Dendritic cell treated with granulocyte-macrophage colony-stimulating factor and Interleukin-4, amounts not matched to agents 40 ng/mL and 50 ng/mL, for 4 days (primary cell): ENCODE measurements at regions of chr1 and their contacts with region 1.

Region 1: GRCh38 chr1:46247436-46248121 is at the start of gene RAD54L:
- H3K4me3 Mint-ChIP-seq: peak within 1 kb of the TSS; percentile 95
- H3K27ac Mint-ChIP-seq: peak within 1 kb of the TSS; percentile 86
- H3K4me1 Mint-ChIP-seq: peaks cover 20% of the 10 kb centered on the region
- H3K27me3 Mint-ChIP-seq: no peaks in the 10 kb centered on the region

Region 2: DNA sequence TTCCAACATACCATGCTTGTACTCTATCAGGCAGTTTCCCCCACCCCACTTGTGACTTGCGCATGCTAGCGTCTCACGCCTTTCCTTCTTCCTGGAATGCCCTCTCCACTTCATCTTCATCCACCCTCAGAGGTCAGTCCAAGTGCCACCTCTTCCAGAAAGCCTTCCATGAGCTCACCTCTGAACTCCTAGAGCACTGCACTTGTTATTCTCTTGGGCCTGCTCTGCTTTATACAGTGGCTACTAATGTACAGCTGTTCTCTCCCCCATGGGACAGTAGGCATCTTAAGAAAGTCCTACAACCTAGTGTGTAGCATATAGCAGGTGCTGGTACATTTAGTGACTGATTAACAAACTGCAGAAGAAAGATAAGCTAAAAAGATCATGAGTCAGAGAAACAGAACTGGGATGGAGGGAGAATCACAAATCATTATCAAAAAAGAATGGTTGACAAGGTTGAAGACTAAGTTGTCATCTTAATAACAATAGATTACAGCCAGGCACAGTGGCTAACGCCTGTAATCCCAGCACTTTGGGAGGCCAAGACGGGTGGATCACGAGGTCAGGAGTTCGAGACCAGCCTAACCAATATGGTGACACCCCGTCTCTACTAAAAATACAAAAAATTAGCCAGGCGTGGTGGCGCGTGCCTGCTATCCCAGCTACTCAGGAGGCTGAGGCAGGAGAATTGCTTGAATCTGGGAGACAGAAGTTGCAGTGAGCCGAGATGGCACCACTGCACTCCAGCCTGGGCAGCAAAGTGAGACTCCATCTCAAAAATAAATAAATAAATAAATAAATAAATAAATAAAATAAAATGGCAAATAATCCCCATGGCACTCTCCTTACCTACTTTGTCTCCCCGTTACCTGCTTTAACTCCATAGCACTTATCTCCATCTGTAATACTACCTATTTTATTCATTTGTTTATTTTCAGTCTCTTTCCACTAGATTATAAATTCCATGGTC is 89.0 kb before region 1 on chr1:
- intact Hi-C with region 1: no loop called
- H3K4me3 Mint-ChIP-seq: no peak overlapping the region
- H3K27ac Mint-ChIP-seq: no peak overlapping the region
- H3K4me1 Mint-ChIP-seq: no peaks in the 10 kb centered on the region
- H3K27me3 Mint-ChIP-seq: peaks cover 4% of the 10 kb centered on the region

Region 3: DNA sequence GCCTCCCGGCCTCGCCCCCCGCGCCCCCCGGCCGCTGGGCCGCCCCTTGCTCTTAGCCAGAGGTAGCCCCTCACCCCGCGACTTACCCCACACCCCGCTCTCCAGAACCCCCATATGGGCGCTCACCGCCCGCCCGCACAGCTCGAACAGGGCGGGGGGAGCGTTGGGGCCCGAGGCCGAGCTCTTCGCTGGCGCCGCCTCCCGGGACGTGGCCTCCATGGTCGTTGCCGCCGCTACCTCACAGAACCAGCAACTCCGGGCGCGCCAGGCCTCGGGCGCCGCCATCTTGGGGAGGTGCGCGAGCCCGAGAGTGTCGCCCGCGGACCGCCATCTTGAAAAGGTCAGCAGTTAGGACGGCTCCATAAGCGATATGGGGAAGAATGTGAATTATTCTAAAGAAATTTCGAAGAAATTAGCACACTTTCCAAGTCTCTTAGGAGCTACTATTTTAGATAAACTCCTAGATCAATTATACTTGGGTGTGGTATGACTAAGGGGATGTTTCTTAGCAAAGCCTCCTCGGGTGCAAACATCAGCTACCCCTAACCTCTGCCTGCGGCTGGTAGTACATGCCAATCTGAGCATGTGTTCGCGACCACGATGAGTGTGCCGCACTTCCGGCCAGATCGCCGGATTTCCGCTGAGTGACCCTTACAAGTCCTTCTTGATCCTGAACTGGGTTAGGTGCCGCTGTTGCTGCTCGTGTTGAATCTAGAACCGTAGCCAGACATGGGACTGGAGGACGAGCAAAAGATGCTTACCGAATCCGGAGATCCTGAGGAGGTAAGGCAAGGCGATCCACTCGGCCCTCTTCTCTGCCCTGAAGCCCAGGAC is 55.7 kb after region 1 on chr1 and contains the starts of genes LRRC41 and UQCRH:
- intact Hi-C with region 1: loop called (anchors 2 kb)
- H3K4me3 Mint-ChIP-seq: peak within 1 kb of the TSS; percentile 99
- H3K27ac Mint-ChIP-seq: peak within 1 kb of the TSS; percentile 99
- H3K4me1 Mint-ChIP-seq: peaks cover 53% of the 10 kb centered on the region
- H3K27me3 Mint-ChIP-seq: no peaks in the 10 kb centered on the region

Region 4: GRCh38 chr1:46340404-46341221 is 93.0 kb after region 1 on chr1 and contains the start of gene NSUN4:
- intact Hi-C with region 1: loop called (anchors 2 kb)
- H3K4me3 Mint-ChIP-seq: peak within 1 kb of the TSS; percentile 99
- H3K27ac Mint-ChIP-seq: peak within 1 kb of the TSS; percentile 100
- H3K4me1 Mint-ChIP-seq: peaks cover 58% of the 10 kb centered on the region
- H3K27me3 Mint-ChIP-seq: no peaks in the 10 kb centered on the region